ENCODE measurements at regions of chr15 and their contacts with region 1.

Region 1: GRCh38 chr15:99704444-99704838 is 28.8 kb downstream of the LYSMD4 start:
- DNase-seq: peak; percentile 87
- H3K4me3 ChIP-seq: no peak overlapping the region
- H3K27ac ChIP-seq: no peak overlapping the region
- H3K27me3 ChIP-seq: no peaks in the 10 kb centered on the region
- CTCF ChIP-seq: peak; percentile 66

Region 2: GRCh38 chr15:99275525-99276128 is 428.8 kb before region 1 on chr15:
- in situ Hi-C with region 1: loop called (anchors 25 kb)
- DNase-seq: no peak
- H3K4me3 ChIP-seq: no peak overlapping the region
- H3K27ac ChIP-seq: no peak overlapping the region
- H3K27me3 ChIP-seq: no peaks in the 10 kb centered on the region
- CTCF ChIP-seq: no peak

Region 3: GRCh38 chr15:99452774-99453636 is 251.4 kb before region 1 on chr15:
- in situ Hi-C with region 1: no loop called
- DNase-seq: no peak
- H3K4me3 ChIP-seq: no peak overlapping the region
- H3K27ac ChIP-seq: no peak overlapping the region
- H3K27me3 ChIP-seq: no peaks in the 10 kb centered on the region
- CTCF ChIP-seq: no peak